ENCODE measurements at regions of chr9 and their contacts with region 1.

Region 1: DNA sequence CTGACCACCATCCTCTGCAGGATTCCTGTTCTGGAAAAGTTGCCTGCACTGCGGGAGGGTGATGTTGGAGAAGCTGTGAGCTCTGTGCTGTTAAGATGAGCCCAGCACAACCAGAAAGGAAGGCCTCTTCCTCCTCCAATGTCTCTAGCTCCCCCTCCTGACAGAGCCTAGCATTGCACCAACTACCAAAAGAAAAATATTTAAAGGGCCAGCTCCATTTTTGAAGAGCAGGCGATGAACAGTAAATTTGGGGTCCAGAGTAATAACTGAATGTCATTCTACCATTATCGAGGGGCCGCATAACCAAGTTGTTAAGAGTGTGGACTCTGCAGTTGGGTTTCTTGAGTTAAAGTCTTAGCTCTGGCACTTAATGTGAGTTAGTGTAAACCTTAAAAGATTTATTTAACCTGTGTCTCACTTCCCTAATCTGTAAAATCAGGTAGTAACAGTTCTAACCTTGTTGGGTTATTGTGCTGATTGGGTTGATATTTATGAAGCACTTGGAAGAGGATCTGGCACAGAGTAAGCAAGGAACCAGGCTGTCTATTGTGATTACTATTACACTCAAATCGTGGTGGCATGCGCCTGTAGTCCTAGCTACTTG is 3.9 kb downstream of the TEX53 start:
- DNase-seq: peak; percentile 64 to 72
- ATAC-seq: peak; percentile 62 to 88; a peak in 3 of 6 replicates
- H3K4me3 ChIP-seq: no peak overlapping the region
- H3K27ac ChIP-seq: peak overlapping the region in 1 of 2 experiments; percentile 43; a peak in 2 of 6 replicates
- H3K4me1 ChIP-seq: 0 out of 3 replicates have a peak, but pooled peaks cover 3% of the 10 kb centered on the region
- CTCF ChIP-seq: peak; percentile 91
- EP300 ChIP-seq: no peak
- POLR2A ChIP-seq: no peak
- RAD21 ChIP-seq: peak; percentile 89 to 97

Region 2: GRCh38 chr9:114413861-114414301 is 239.8 kb before region 1 on chr9:
- CTCF ChIA-PET with region 1: interaction called, 160 read pairs
- POLR2A ChIA-PET with region 1: no interaction called
- DNase-seq: no peak
- ATAC-seq: no peak
- H3K4me3 ChIP-seq: no peak overlapping the region
- H3K27ac ChIP-seq: no peak overlapping the region
- H3K4me1 ChIP-seq: no peaks in the 10 kb centered on the region
- CTCF ChIP-seq: no peak
- EP300 ChIP-seq: no peak
- POLR2A ChIP-seq: no peak
- RAD21 ChIP-seq: no peak

Region 3: DNA sequence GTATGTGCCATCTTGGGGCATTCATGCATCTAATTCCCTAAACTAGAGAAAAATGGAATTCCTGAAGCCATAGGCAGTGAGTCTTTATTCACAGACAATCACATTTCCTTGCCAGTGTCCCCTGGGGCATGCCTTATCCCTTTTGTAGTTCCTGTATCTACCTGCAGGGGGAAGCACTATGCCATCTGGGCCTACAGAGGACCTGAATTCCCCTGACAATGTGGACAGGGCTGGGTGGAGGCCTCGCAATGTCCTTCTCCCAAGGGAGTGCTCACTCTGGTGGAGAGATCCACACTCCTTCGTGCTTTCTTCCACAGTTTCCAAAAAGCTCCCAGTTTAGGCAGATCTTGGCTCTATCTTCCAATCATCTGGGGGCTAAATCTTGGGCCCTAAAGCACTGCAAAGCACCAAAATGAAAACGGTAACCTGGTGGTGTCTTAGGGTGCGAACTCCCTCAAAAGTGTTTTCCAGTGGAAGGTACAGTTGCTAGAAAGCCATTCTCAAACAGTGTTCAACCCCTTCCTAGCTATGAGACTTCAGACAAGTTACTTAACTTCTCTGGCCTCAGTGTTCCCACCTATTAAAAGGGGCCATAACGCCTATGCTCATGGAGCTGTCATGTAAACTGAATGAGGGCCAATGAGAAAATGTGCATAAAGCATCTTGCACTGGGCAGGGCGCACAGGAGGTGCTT is 165.9 kb before region 1 on chr9:
- CTCF ChIA-PET with region 1: interaction called, 81 read pairs
- POLR2A ChIA-PET with region 1: no interaction called
- DNase-seq: peak; percentile 74 to 79
- ATAC-seq: peak; percentile 92 to 98
- H3K4me3 ChIP-seq: no peak overlapping the region
- H3K27ac ChIP-seq: no peak overlapping the region
- H3K4me1 ChIP-seq: peaks cover 9% of the 10 kb centered on the region; the same call in 1 of the 3 replicates
- CTCF ChIP-seq: peak; percentile 77
- EP300 ChIP-seq: no peak
- POLR2A ChIP-seq: no peak
- RAD21 ChIP-seq: peak; percentile 84 to 87

Region 4: DNA sequence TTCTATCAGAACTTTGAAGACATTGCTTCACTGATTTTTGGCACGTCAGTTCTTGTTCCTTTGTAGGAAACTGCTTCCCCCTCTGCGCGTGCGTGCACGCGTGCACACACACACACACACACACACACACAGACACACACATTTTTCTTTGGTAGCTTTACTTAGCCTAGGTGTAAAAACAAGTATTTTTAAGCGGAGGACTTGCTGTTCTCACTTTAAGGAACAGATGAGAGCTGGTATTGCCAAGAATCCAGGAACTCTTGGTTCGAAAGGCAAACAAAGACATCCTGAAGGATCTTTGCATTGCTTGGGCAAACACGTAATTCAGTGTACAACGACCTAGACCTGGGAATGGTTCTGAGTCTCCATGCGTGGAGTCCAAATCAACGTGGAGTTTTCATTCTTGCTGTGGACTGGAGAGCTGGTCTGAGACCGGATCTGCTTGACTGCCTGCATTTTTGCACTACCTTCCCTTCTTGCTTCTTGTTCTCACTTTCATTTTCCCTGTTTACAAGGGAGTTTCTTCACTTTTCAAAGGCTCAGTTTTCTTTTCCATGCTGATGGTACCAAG is 34.4 kb before region 1 on chr9:
- CTCF ChIA-PET with region 1: interaction called, 27 read pairs
- POLR2A ChIA-PET with region 1: no interaction called
- DNase-seq: no peak
- ATAC-seq: no peak
- H3K4me3 ChIP-seq: no peak overlapping the region
- H3K27ac ChIP-seq: no peak overlapping the region
- H3K4me1 ChIP-seq: peaks cover 21% of the 10 kb centered on the region
- CTCF ChIP-seq: no peak
- EP300 ChIP-seq: no peak
- POLR2A ChIP-seq: no peak
- RAD21 ChIP-seq: no peak

Region 5: DNA sequence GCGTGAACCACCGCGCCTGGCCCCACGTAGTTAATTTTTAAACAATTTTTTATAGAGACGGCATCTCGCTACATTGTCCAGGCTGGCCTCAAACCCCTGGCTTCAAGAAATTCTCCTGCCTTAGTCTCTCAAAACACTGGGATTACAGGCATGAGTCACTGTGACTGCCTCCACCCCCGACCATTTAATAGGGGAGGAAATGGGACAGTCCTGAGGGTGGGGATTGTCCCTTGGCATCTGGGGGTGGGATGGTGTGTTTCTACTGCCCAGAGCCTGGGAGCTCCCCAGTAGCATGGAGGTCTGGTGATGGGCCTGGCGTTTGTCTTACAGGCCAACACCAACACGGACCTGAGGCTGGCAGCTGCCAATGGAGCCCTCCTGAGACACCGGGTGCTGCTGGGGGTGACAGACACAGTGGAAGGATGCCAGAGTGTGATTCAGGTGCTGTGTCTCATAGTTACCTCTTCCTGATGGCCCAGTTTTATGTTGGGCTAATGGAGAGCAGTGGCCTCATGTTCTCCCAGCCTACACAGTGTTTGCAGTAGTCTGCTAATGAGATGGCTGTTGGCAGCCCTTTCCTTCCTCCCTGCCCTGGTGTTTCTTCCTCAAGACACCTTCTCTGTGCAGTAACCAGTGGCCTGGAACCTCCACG is 20.1 kb before region 1 on chr9:
- CTCF ChIA-PET with region 1: interaction called, 13 read pairs
- POLR2A ChIA-PET with region 1: no interaction called
- DNase-seq: no peak
- ATAC-seq: no peak
- H3K4me3 ChIP-seq: no peak overlapping the region
- H3K27ac ChIP-seq: no peak overlapping the region
- H3K4me1 ChIP-seq: no peaks in the 10 kb centered on the region
- CTCF ChIP-seq: no peak
- EP300 ChIP-seq: no peak
- POLR2A ChIP-seq: no peak
- RAD21 ChIP-seq: no peak

Region 6: DNA sequence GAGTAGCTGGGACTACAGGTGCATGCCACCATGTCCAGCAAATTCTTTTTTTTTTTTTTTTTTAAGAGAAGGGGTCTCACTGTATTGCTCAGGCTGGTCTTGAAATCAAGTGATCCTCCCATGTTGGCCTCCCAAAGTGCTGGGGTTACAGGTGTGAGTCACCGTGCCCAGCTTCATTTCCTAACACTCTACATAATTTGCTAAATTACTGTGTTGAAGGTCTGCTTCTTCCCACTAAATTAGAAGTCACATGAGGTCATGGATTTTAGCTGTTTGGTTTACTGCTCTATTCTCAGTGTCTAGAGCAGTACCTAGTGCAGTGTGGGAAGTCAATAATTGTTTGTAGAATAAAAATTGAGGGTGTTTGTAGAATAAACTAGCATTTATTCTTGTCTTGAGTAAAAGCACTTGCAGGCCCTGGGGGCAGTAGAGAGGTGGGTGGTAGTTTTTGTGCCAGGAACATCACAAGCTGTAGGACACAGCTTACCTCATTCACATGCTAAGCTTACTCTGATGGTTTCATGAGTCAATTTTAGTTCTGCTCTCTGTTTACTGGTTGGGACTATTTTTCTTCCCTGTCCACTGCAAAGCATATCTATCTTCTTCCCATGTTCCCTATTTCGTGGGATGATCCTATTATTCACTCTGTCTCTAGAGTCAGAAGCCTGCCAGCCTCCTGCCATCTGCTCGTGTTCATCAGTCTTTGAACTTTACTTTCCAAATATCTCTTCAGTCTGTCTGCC is 21.3 kb after region 1 on chr9:
- CTCF ChIA-PET with region 1: interaction called, 14 read pairs
- POLR2A ChIA-PET with region 1: no interaction called
- DNase-seq: no peak
- ATAC-seq: no peak
- H3K4me3 ChIP-seq: no peak overlapping the region
- H3K27ac ChIP-seq: peak overlapping the region; percentile 82 to 91; a peak in 4 of 6 replicates
- H3K4me1 ChIP-seq: peaks cover 51% of the 10 kb centered on the region
- CTCF ChIP-seq: no peak
- EP300 ChIP-seq: no peak
- POLR2A ChIP-seq: no peak
- RAD21 ChIP-seq: no peak

Region 7: GRCh38 chr9:114745108-114745848 is 91.6 kb after region 1 on chr9:
- CTCF ChIA-PET with region 1: no interaction called
- POLR2A ChIA-PET with region 1: no interaction called
- DNase-seq: no peak
- ATAC-seq: no peak
- H3K4me3 ChIP-seq: no peak overlapping the region
- H3K27ac ChIP-seq: no peak overlapping the region
- H3K4me1 ChIP-seq: peaks cover 15% of the 10 kb centered on the region
- CTCF ChIP-seq: no peak
- EP300 ChIP-seq: no peak
- POLR2A ChIP-seq: no peak
- RAD21 ChIP-seq: no peak

Region 8: GRCh38 chr9:115013998-115014397 is 360.3 kb after region 1 on chr9:
- CTCF ChIA-PET with region 1: interaction called, 259 read pairs
- POLR2A ChIA-PET with region 1: no interaction called
- DNase-seq: peak; percentile 72 to 79
- ATAC-seq: peak; percentile 72 to 90
- H3K4me3 ChIP-seq: no peak overlapping the region
- H3K27ac ChIP-seq: no peak overlapping the region
- H3K4me1 ChIP-seq: 0 out of 3 replicates have a peak, but pooled peaks cover under 1% of the 10 kb centered on the region
- CTCF ChIP-seq: peak; percentile 93
- EP300 ChIP-seq: no peak
- POLR2A ChIP-seq: no peak
- RAD21 ChIP-seq: peak; percentile 98